AG04450 (cell line): ENCODE measurements at regions of chr18 and their contacts with region 1.

Region 1: DNA sequence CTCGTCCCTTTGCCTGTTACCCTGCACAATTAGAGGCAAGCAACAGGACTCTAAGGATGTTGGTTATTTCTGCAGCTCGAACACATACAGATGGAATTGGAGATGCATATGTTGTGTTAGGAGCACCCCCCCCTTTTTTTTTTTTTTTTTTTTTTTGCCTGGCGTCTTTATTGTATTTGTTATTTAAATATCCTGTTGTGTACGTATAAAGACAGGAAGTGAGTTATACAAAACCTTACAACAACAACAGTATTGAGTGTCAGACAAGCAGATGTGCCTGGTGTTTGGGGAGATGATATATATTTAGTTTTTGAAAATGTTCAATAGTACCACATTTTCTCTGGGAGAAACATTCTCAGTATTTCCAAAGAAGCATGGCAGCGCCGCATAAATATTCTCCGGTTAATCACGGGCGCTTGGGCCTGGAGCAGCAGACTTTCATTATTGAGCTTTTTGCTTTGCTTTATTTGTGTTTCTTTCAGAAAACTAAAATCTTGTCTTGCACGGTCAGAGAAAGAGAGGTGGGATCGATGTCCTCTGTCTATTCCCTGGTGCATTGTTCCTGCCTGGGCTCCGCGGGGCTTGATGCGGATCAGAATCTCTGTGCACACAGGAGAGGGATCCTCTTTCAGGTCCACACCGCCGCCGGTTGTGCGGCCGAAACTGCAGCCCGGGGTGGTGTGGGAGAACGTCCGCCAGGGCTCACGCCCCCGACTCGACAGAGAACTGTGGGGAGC is 23.2 kb upstream of the ZNF516 start:
- DNase-seq: no peak
- H3K4me3 ChIP-seq: peak overlapping the region; percentile 41
- H3K27ac ChIP-seq: no peak overlapping the region
- H3K27me3 ChIP-seq: no peaks in the 10 kb centered on the region
- CTCF ChIP-seq: no peak

Region 2: GRCh38 chr18:76503649-76504398 is 14.5 kb before region 1 on chr18:
- CTCF ChIA-PET with region 1: interaction called, 10 read pairs
- POLR2A ChIA-PET with region 1: no interaction called
- DNase-seq: no peak
- H3K4me3 ChIP-seq: no peak overlapping the region
- H3K27ac ChIP-seq: no peak overlapping the region
- H3K27me3 ChIP-seq: no peaks in the 10 kb centered on the region
- CTCF ChIP-seq: no peak

Region 3: DNA sequence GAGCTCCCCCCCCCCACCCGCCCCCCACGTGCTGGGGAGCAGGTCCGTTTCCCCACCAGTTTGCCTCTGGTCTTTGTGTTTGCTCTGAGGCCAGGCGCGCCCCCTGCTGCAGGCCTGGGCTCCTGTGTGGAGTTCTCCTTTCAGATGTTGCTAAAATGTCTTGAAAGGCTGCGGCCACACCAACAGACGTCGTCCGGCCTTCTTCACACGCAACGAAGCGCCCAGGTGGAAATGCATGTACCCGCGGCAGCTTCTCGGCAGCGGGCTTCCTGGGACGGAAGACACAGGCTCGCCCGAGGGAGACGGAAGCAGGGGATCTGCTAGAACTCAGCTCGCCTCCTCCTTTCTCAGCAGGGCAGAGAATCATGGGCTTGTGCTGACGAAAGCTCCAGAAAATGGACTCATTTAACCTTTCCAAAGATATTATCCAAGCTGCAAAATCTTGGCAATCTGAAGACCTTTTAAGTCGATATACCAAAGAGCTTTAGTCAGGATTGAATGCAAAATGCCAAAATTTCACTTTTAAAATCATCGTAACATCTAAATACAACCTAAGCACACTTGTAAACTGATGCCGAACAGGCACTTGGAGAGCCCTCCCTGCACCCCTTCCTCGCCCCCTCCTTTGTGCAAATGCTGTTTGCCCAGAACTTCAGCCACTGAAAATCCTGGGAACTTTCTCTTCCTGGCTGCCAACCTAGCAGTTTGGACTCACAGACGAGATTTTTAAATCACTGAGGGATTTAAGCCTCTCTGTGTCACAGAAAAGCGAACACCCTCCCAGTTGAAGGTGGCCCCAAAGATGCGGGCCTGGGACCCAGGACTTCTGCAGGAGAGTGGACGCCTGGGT is 102.3 kb after region 1 on chr18:
- CTCF ChIA-PET with region 1: interaction called, 13 read pairs
- POLR2A ChIA-PET with region 1: no interaction called
- DNase-seq: peak; percentile 42
- H3K4me3 ChIP-seq: peak overlapping the region; percentile 36; the same call in 1 of the 2 replicates
- H3K27ac ChIP-seq: peak overlapping the region; percentile 68
- H3K27me3 ChIP-seq: peaks cover 2% of the 10 kb centered on the region
- CTCF ChIP-seq: peak; percentile 77

Region 4: DNA sequence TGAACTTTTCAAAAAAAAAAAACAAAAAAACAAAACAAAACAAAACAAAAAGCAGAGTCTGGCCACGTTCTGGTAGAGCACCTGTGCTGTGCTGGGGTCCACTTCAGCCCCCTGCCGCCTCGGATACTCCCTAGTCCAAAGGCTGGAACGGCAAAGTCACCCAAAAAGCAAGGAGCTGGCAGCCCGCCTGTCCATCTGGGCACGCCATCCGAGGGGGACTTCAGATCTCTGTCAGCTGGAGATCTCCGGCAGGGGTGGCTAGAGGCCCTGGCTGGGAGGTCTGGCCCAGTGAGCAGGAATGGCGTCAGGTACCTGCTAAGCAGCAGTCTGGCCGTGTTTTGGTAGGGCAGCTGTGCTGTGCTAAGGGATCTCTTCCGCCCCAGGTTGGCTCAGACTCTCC is 129.0 kb after region 1 on chr18:
- CTCF ChIA-PET with region 1: no interaction called
- POLR2A ChIA-PET with region 1: no interaction called
- DNase-seq: no peak
- H3K4me3 ChIP-seq: no peak overlapping the region
- H3K27ac ChIP-seq: no peak overlapping the region
- H3K27me3 ChIP-seq: peaks cover 24% of the 10 kb centered on the region
- CTCF ChIP-seq: no peak